ENCODE measurements at regions of chr14 and their contacts with region 1.

Region 1: DNA sequence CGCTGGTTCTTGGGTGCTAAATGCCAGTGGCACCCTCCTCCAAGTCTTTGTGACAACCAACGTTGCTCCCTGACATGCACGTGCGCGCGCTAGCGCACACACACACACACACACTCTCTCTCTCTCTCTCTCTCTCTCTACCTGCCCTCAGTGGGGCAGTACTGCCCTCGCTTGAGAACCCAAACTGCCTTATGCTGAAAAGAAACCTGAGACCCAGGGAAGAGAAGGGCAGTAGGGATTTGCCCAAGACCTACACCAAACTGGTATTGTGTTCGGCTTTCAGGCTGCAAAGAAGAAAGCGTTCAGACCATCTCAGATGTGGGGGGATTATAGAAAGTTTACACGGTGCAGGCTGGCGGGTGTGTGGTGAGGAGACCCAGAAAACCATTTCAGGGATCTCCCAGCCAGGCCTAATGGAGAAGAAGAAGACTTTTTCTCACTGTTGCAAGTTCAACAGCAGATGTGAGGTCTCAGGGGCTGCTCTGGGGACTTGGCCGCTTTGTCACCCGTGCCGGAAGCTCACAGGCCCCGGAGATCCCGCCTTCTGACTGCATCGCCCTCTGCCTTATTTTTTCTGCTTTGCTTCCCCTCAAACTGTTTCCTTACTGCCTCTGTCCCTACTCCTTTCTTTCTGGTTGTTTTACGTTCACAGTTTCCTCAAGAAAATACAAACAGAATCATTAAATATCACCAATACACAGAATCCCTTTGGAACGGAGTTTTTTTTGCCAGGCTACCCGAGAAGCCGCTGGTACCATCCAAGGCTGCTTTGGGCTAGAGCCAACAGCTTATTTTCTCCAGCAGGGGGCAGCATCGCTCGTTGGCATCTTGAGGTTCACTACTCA is 82.4 kb downstream of the PPM1A start:
- DNase-seq: peak; percentile 90
- ATAC-seq: peak; percentile 74
- H3K4me3 Mint-ChIP-seq: peak overlapping the region; percentile 76
- H3K27ac Mint-ChIP-seq: peak overlapping the region; percentile 82
- H3K4me1 Mint-ChIP-seq: peaks cover 35% of the 10 kb centered on the region
- H3K27me3 Mint-ChIP-seq: no peaks in the 10 kb centered on the region; the same call in 1 of the 2 replicates
- CTCF ChIP-seq: peak; percentile 95

Region 2: DNA sequence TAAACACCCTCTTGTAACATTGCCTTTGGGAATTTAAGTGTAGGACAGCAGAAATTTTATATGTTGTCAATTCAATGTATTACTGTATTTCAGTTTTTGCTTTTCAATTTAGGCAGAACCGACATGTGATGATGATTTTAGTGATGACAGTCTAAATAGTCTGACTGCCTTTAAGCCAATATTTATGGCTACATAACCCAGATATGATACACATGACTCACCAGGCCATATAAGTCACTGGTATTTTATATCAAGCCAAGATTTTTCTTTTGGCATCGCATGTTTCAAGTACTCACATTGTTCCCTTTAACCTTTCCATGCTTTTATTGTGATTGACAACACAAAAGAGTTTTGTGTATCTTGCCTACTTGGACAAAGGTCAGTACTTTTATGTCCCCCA is 96.0 kb before region 1 on chr14:
- CTCF ChIA-PET with region 1: no interaction called
- POLR2A ChIA-PET with region 1: no interaction called
- DNase-seq: no peak
- ATAC-seq: no peak
- H3K4me3 Mint-ChIP-seq: no peak overlapping the region
- H3K27ac Mint-ChIP-seq: no peak overlapping the region
- H3K4me1 Mint-ChIP-seq: no peaks in the 10 kb centered on the region
- H3K27me3 Mint-ChIP-seq: no peaks in the 10 kb centered on the region
- CTCF ChIP-seq: no peak

Region 3: DNA sequence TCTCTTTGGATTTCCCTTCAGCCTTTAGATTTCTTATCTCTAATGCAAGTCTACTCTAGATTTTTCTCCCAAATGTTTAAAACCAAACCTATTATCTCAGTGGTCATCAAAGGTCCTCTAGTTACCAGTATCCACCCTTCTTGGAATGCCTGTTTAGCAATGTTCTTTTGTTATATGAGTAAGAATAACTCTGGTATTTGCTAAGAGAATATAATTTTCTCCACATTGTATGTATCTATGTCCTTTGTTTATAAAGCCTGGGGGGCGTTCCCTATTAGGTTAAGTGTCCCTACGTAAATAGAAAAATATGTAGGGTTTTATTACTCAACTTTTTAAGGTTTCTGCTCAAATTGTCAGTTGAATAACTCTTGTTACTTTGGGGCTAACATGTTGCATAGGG is 55.1 kb before region 1 on chr14:
- CTCF ChIA-PET with region 1: interaction called, 16 read pairs
- POLR2A ChIA-PET with region 1: no interaction called
- DNase-seq: no peak
- ATAC-seq: no peak
- H3K4me3 Mint-ChIP-seq: no peak overlapping the region
- H3K27ac Mint-ChIP-seq: peak overlapping the region; percentile 48
- H3K4me1 Mint-ChIP-seq: peaks cover 88% of the 10 kb centered on the region
- H3K27me3 Mint-ChIP-seq: no peaks in the 10 kb centered on the region
- CTCF ChIP-seq: no peak

Region 4: DNA sequence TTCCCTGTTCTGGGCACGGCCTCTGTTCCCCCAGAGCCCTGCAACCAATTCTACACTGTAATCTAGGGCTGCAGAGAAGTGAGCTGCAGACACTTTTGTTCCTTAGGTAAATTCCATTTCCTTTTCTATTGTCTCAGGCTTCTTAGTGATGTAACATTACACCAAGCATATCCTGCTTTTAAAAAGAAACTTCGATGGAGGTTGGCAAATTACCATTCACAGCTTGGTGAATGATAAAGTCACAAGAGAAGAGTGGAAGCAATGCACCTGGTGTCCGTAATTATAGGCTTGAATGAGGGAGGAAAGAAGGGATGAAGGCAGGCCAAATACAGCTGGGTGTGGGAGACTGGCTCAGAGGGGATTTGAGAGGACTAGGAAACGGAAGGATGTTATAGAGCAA is 13.8 kb before region 1 on chr14:
- CTCF ChIA-PET with region 1: interaction called, 21 read pairs
- POLR2A ChIA-PET with region 1: no interaction called
- DNase-seq: no peak
- ATAC-seq: peak; percentile 77
- H3K4me3 Mint-ChIP-seq: peak overlapping the region; percentile 31
- H3K27ac Mint-ChIP-seq: peak overlapping the region; percentile 97
- H3K4me1 Mint-ChIP-seq: peaks cover 59% of the 10 kb centered on the region
- H3K27me3 Mint-ChIP-seq: no peaks in the 10 kb centered on the region; the same call in 1 of the 2 replicates
- CTCF ChIP-seq: no peak

Region 5: GRCh38 chr14:60420050-60420449 is 88.6 kb after region 1 on chr14:
- CTCF ChIA-PET with region 1: no interaction called
- POLR2A ChIA-PET with region 1: no interaction called
- DNase-seq: no peak
- ATAC-seq: peak; percentile 65
- H3K4me3 Mint-ChIP-seq: no peak overlapping the region
- H3K27ac Mint-ChIP-seq: 0 out of 2 replicates have a peak overlapping the region, but pooled peaks have one; percentile 7
- H3K4me1 Mint-ChIP-seq: peaks cover 11% of the 10 kb centered on the region; the same call in 1 of the 2 replicates
- H3K27me3 Mint-ChIP-seq: no peaks in the 10 kb centered on the region; the same call in 1 of the 2 replicates
- CTCF ChIP-seq: no peak

Region 6: GRCh38 chr14:60508707-60509437 is 177.4 kb after region 1 on chr14 and contains the start of gene SIX6:
- CTCF ChIA-PET with region 1: interaction called, 22 read pairs
- POLR2A ChIA-PET with region 1: interaction called, 5 read pairs
- DNase-seq: peak; percentile 82
- ATAC-seq: peak; percentile 38
- H3K4me3 Mint-ChIP-seq: peak within 1 kb of the TSS; percentile 72
- H3K27ac Mint-ChIP-seq: no peak within 1 kb of the TSS
- H3K4me1 Mint-ChIP-seq: peaks cover 75% of the 10 kb centered on the region
- H3K27me3 Mint-ChIP-seq: peaks cover 100% of the 10 kb centered on the region
- CTCF ChIP-seq: no peak
- total RNA-seq, gene SIX6: 0.07 TPM in 1 of 3 replicates, not detected in the others

Region 7: DNA sequence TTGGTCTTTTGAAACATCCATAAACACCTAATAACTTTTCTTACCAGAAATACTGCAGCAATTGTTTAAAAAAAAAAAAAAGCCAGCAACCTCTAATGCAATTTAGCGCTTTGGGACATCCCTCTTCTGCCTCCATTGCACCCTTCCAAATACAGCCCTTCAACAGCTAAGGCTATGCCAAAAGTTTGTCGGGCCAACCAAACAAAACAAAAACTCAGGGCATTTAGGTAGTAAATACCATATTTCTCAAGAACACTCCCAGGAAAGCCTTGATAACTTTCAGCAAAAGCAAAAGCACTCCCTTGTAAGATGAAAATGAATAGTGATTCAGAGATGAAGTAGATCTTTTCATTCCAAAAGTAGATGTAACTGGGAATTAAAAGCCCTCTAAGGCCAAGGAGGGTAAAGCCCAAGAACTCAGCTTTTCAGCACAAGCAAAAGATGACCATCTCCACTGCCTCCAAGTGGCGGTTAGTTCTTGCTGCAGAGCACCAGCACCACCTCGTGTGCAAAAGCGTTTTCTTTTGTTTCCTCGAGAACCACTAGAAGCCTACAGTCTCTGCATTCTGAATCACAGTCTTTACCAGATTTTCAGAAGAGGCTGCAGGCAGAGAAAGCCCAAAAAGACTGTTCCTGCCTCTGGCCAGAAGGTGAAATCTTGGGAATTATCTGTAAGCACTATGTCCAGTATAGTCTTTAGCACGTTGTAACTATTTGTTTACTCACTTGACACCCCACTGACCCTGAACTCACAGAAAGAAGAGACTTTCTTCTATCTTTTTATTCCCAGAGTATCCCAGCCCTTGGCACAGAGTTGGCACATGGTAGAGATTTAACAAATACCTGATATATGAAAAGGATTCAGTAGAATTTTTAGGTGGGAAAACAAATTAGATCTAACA is 230.7 kb after region 1 on chr14:
- CTCF ChIA-PET with region 1: interaction called, 35 read pairs
- POLR2A ChIA-PET with region 1: no interaction called
- DNase-seq: peak; percentile 68
- ATAC-seq: peak; percentile 98
- H3K4me3 Mint-ChIP-seq: no peak overlapping the region
- H3K27ac Mint-ChIP-seq: no peak overlapping the region
- H3K4me1 Mint-ChIP-seq: peaks cover 11% of the 10 kb centered on the region
- H3K27me3 Mint-ChIP-seq: no peaks in the 10 kb centered on the region
- CTCF ChIP-seq: peak; percentile 58; the same call in 1 of the 2 replicates